Common myeloid progenitor, CD34-positive (primary cell): ENCODE measurements at regions of chr5 and their contacts with region 1.

Region 1: DNA sequence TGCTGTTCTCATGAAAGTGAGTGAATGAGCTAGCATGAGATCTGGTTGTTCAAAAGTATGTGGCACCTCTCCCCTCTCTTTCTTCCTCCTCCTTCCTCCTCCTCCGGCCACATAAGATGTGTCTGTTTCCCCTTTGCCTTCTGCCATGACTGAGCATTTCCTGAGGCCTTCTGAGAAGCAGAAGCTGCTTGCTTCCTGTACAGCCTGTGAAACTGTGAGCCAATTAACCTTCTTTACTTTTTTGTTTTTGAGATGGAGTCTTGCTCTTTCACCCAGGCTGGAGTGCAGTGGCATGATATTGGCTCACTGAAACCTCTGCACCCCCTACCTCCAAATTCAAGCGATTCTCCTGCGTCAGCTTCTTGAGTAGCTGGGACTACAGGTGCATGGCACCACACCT is 6.1 kb downstream of the S100Z start:
- DNase-seq: peak; percentile 91 to 98 (median 97)
- H3K4me3 ChIP-seq: peak overlapping the region in 3 of 7 experiments; percentile 32 to 45 (median 39)
- H3K27ac ChIP-seq: peak overlapping the region; percentile 68 to 84
- H3K4me1 ChIP-seq: peaks cover 32 to 92% (median 79%) of the 10 kb centered on the region in 4 experiments
- H3K27me3 ChIP-seq: no peaks in the 10 kb centered on the region

Region 2: GRCh38 chr5:76818844-76819831 is 36.8 kb before region 1 on chr5 and contains the start of gene F2RL1:
- CTCF ChIA-PET with region 1: interaction called, 13 read pairs
- POLR2A ChIA-PET with region 1: interaction called, 7 read pairs
- DNase-seq: peak; percentile 65 to 76 (median 66)
- H3K4me3 ChIP-seq: peak within 1 kb of the TSS; percentile 79 to 99 (median 92)
- H3K27ac ChIP-seq: peak within 1 kb of the TSS; percentile 72 to 83
- H3K4me1 ChIP-seq: peaks cover 6 to 34% (median 22%) of the 10 kb centered on the region in 4 experiments
- H3K27me3 ChIP-seq: no peaks in the 10 kb centered on the region